Ovary (tissue), 10 donors: ENCODE measurements at regions of chr20 and their contacts with region 1.

Region 1: GRCh38 chr20:24176661-24177060 is 188.1 kb upstream of the GGTLC1 start:
- DNase-seq: no peak
- H3K4me3 ChIP-seq: no peak overlapping the region
- H3K27ac ChIP-seq: no peak overlapping the region
- H3K4me1 ChIP-seq: no peaks in the 10 kb centered on the region
- H3K27me3 ChIP-seq: no peaks in the 10 kb centered on the region
- CTCF ChIP-seq: no peak
- EP300 ChIP-seq: no peak
- POLR2A ChIP-seq: no peak

Region 2: GRCh38 chr20:23637282-23638221 is 539.1 kb before region 1 on chr20 and contains the start of gene CST3:
- intact Hi-C with region 1: no loop called
- DNase-seq: peak; percentile 88 to 94 (median 93)
- H3K4me3 ChIP-seq: peak within 1 kb of the TSS; percentile 97
- H3K27ac ChIP-seq: peak within 1 kb of the TSS; percentile 26 to 77
- H3K4me1 ChIP-seq: peaks cover 22% of the 10 kb centered on the region
- H3K27me3 ChIP-seq: no peaks in the 10 kb centered on the region
- CTCF ChIP-seq: no peak
- EP300 ChIP-seq: no peak
- POLR2A ChIP-seq: peak; percentile 87
- total RNA-seq, gene CST3: 317 to 889 (median 588) TPM

Region 3: DNA sequence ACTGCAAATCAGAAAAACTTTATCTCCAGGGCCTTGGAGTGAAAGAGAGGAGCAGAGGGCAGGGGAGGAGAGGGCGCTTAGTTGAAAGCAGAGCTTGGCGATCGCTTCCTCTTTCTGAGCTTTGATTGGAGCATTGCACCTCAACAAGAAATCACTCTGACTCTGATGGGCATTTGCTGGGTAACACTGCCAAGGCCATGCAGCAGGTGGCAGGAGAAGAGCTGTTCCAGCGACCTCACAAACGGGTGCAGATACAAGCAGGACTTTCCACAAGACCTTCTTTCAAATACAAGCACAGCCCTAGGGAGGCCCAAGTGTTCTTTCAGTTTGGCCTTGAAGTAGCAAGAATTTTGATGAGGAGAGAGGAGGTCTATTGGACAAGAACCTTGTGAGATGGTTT is 28.6 kb after region 1 on chr20:
- intact Hi-C with region 1: no loop called
- DNase-seq: no peak
- H3K4me3 ChIP-seq: no peak overlapping the region
- H3K27ac ChIP-seq: no peak overlapping the region
- H3K4me1 ChIP-seq: peaks cover 2% of the 10 kb centered on the region
- H3K27me3 ChIP-seq: no peaks in the 10 kb centered on the region
- CTCF ChIP-seq: no peak
- EP300 ChIP-seq: no peak
- POLR2A ChIP-seq: no peak

Region 4: DNA sequence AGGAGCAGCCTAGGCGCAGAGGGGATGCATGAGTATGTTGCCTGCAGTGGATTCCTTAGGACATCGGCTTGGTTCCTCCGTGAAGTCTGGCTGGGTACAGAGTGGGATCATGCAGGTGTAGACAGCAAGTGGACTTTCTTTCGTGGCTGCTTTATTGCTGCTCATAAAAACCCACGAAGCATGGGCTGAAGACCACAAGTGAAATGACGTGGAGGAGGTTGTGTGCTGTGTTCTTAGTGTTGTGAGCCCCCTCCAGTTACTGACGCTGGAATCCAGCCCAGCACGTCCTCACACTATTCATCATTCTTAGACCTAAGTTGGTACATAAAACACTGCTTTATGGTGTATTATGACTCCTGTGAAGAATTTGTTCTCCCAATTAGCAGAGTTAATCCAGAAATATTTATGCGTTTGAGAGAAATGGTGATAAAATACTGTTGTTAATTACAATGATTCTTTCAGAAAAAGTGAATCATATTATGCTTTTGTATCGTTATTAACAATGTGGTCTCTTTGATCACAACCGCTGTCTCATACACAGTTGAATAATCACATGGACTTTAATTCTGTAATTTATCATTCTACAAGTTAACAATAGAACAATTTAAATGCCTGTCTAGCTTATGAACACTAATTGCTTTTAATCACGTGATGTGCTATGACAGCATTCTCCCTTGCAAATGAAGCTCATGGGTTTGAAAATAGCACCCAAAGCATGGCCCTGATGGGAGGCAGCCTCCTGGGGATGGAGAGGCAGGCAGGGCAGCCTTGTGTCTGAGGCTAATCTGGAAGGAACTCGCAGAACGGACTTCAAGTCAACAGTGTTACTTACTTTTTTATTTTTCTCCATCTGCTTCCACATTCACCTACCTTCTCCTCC is 58.9 kb after region 1 on chr20:
- intact Hi-C with region 1: loop called in 1 of 4 experiments (anchors 10 kb)
- DNase-seq: no peak
- H3K4me3 ChIP-seq: no peak overlapping the region
- H3K27ac ChIP-seq: no peak overlapping the region
- H3K4me1 ChIP-seq: no peaks in the 10 kb centered on the region
- H3K27me3 ChIP-seq: no peaks in the 10 kb centered on the region
- CTCF ChIP-seq: no peak
- EP300 ChIP-seq: no peak
- POLR2A ChIP-seq: no peak